Heart left ventricle (tissue), 16 donors: ENCODE measurements at regions of chr7 and their contacts with region 1.

Region 1: DNA sequence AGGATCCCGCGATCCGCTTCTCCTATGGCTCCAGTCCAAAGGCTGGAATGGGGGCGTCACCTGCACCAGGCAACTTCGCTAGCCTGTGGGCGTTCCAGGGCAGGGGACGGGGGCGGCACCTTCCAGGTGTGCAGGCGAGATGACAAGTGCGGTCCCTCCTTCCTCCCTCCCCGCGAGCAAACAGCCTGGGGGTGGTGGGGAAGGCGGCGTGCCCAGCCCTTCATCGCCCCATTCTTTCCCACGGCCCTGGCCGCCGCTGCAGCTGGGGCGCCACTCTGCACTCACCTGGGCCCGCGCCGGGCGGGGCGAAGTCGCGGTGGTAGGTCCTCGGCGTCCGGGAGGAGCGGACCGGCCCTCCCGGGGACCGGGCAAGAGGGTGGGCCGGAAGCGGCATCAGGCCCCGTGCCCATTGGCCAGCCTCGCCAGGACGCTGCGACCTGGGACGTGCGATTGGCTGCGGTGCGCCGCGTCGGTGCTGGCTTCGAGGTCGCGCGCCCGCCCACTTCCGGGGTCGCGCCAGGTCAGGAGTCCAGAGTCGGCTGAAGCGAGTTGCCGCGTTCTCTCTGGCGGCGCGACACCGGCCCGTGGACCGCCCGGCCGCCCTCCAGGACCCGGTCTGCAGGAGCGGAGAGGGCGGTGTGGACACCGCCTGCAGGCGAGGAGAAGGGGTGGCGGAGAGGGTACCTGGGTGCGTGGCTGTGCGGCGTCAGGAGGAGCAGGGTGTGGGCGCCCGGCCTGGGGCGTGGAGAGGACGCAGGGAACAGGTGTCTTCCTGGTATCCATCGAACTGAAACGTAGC is at the start of gene TECPR1:
- DNase-seq: peak; percentile 96 to 97 (median 97)
- ATAC-seq: peak; percentile 98 to 100 (median 99)
- H3K4me3 ChIP-seq: peak within 1 kb of the TSS; percentile 71 to 99 (median 90)
- H3K27ac ChIP-seq: peak within 1 kb of the TSS; percentile 39 to 91 (median 88)
- H3K4me1 ChIP-seq: peaks cover 0 to 61% (median 35%) of the 10 kb centered on the region in 12 donors
- H3K27me3 ChIP-seq: no peaks in the 10 kb centered on the region
- CTCF ChIP-seq: no peak
- POLR2A ChIP-seq: peak in 1 of 2 donors; percentile 53
- total RNA-seq, gene TECPR1: 12.2 to 33.0 (median 22.7) TPM

Region 2: DNA sequence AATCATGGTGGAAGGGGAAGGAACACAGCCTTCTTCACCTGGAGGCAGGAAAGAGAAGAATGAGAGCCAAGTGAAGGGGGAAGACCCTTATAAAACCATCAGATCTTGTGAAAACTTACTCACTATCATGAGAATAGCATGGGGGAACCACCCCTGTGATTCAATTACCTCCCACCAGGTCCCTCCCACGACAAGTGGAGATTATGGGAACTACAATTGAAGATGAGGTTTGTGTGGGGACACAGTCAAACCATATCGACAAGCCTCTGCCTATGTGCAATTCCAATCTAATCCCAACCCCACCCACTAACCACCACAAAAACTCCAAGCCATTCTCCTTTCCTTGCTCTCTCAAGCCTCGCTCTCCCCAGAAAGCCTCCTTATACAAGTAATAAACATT is 450.9 kb before region 1 on chr7:
- intact Hi-C with region 1: no loop called
- DNase-seq: no peak
- ATAC-seq: no peak
- H3K4me3 ChIP-seq: no peak overlapping the region
- H3K27ac ChIP-seq: no peak overlapping the region
- H3K4me1 ChIP-seq: no peaks in the 10 kb centered on the region
- H3K27me3 ChIP-seq: peaks cover 0 to 4% (median 0%) of the 10 kb centered on the region in 9 donors
- CTCF ChIP-seq: no peak
- POLR2A ChIP-seq: no peak

Region 3: DNA sequence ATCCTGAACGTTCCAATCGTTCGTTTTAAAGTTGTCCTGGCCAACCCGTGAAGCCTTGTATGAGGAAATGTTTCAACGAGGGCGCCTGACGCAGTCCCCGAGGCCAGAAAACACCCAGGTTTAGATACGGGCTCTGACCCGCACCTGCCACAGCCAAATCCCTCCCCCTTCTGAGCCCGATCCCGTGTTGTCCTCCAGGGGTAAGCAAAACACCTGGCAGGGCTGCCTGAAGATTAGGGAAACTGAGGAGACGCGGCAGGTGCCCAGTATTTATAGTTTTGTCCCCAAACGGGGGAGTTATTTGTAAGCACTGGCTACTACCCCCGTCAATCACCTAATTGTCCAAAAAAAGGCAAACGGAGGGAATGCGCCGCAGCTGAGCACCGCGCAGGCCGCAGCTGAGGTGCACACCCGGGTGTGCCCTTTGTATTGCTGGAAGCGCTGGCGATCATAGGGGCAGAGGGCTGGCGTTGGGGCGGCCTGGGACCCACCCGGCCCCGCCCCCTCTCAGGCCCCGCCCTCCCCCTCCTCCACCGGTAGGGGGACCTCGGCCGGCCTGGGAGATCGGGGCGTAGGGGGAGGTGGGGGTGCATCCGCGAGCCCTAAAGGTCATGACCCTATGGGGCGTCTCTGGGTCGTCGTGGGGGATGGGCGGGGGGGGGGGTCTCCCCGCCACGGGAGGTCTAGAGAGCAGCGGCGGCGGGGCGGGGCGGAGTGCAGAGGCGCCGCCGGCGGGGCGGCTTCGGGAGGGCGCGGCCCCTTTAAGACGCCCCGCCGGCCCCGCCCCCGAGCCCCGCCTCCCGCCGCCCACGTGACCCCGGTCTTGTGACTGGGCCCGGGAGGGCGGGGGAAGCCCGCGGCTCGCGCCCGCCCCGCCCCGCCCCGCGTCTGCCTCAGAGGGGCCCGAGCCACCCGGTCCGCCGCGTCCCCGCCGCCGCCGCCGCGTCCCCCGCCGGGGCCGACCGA is 29.0 kb after region 1 on chr7 and contains the start of gene BRI3:
- intact Hi-C with region 1: loop called in 5 of 10 experiments (anchors 2 to 5 kb)
- DNase-seq: peak; percentile 91 to 96 (median 94)
- ATAC-seq: peak; percentile 71 to 81 (median 76)
- H3K4me3 ChIP-seq: peak within 1 kb of the TSS; percentile 65 to 98 (median 86)
- H3K27ac ChIP-seq: peak within 1 kb of the TSS; percentile 79 to 99 (median 96)
- H3K4me1 ChIP-seq: peaks cover 16 to 54% (median 39%) of the 10 kb centered on the region in 12 donors
- H3K27me3 ChIP-seq: no peaks in the 10 kb centered on the region
- CTCF ChIP-seq: peak in 7 of 12 donors; percentile 12 to 59 (median 43)
- POLR2A ChIP-seq: peak in 1 of 2 donors; percentile 93
- total RNA-seq, gene BRI3: 51.0 to 274 (median 223) TPM

Region 4: GRCh38 chr7:98400542-98401340 is 148.7 kb after region 1 on chr7 and contains the start of gene BAIAP2L1:
- intact Hi-C with region 1: loop called in 1 of 10 experiments (anchors 2 kb)
- DNase-seq: peak; percentile 75 to 91 (median 81)
- ATAC-seq: peak; percentile 76 to 98 (median 94)
- H3K4me3 ChIP-seq: peak within 1 kb of the TSS; percentile 52 to 89 (median 66)
- H3K27ac ChIP-seq: peak within 1 kb of the TSS; percentile 29 to 85 (median 68)
- H3K4me1 ChIP-seq: peaks cover 0 to 12% (median 6%) of the 10 kb centered on the region in 12 donors
- H3K27me3 ChIP-seq: peaks cover 0 to 27% (median 12%) of the 10 kb centered on the region in 9 donors
- CTCF ChIP-seq: peak in 4 of 12 donors; percentile 62 to 80 (median 68)
- POLR2A ChIP-seq: peak in 1 of 2 donors; percentile 28
- total RNA-seq, gene BAIAP2L1: 0.64 to 2.7 (median 1.8) TPM